AG04449 (cell line): ENCODE measurements at regions of chr17 and their contacts with region 1.

Region 1: GRCh38 chr17:20009302-20010098 is at the start of gene SPECC1:
- DNase-seq: no peak
- H3K4me3 ChIP-seq: peak within 1 kb of the TSS; percentile 51
- CTCF ChIP-seq: peak; percentile 83

Region 2: GRCh38 chr17:19812407-19812806 is 197.1 kb before region 1 on chr17:
- CTCF ChIA-PET with region 1: no interaction called
- POLR2A ChIA-PET with region 1: no interaction called
- DNase-seq: peak; percentile 1
- H3K4me3 ChIP-seq: no peak overlapping the region
- CTCF ChIP-seq: peak; percentile 10

Region 3: DNA sequence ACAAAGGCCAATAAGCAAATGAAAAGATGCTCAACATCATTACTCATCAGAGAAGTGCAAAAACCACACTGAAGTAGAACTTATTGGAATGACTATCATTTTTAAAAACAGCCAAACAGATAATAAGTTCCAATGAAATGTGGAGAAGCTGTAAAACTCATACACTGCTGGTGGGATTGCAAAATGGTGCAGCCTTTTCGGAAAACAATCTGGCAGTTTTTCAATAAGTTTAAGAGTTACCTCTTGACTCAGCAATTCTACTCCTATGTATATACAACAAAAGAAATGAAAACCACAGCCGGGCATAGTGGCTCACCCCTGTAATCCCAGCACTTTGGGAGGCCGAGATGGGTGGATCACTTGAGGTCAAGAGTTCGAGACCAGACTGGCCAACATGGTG is 81.2 kb before region 1 on chr17:
- CTCF ChIA-PET with region 1: no interaction called
- POLR2A ChIA-PET with region 1: no interaction called
- DNase-seq: no peak
- H3K4me3 ChIP-seq: no peak overlapping the region
- CTCF ChIP-seq: no peak

Region 4: DNA sequence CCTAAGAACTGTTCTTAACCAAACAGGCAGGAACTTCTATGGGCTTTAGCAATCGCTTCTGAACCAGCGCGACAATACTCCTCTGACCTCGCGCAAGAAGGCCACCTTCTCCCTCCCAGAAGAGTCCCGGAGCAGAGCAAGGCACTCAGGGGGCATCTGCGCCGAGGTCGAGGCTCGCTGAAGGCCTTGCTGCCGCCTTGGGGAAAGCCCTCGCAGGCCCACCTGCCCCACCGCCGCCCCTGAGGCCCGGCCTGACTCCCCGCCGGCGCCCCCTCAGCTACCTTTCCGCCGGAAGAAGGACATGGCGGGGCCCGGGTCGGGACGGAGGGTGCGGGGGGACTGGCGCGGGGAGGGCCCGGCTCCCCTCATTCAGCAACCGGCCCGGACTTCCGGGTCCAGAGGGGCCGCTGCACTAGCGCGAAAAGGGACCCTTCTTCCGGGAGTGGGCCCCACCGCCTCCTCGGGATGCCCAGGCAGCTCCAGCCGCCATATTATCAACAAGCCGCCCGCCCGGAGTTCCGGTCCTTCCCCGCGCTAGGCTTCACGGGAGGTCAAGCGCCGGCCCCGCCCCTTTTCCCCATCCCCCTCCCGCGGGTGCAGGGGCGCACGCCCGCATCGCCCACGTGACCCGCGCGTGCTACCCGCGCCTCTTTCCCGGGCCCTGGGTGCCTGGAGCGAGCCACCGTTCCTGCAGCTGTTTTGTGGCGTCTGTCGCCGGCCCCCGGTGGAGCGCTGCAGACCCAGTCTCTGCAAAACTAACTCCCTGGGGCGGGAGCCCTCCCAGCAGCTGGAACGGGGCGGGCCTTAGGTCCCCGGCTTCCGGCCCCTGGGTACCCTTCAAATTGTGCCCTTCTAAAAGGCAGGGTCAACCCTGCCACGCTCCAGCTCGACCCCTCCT is 31.9 kb before region 1 on chr17 and contains the start of gene AKAP10:
- CTCF ChIA-PET with region 1: interaction called, 11 read pairs
- POLR2A ChIA-PET with region 1: no interaction called
- DNase-seq: peak; percentile 9
- H3K4me3 ChIP-seq: peak within 1 kb of the TSS; percentile 92
- CTCF ChIP-seq: no peak

Region 5: GRCh38 chr17:19992803-19993713 is 16.4 kb before region 1 on chr17:
- CTCF ChIA-PET with region 1: interaction called, 140 read pairs
- POLR2A ChIA-PET with region 1: no interaction called
- DNase-seq: peak; percentile 26
- H3K4me3 ChIP-seq: no peak overlapping the region
- CTCF ChIP-seq: peak; percentile 62

Region 6: DNA sequence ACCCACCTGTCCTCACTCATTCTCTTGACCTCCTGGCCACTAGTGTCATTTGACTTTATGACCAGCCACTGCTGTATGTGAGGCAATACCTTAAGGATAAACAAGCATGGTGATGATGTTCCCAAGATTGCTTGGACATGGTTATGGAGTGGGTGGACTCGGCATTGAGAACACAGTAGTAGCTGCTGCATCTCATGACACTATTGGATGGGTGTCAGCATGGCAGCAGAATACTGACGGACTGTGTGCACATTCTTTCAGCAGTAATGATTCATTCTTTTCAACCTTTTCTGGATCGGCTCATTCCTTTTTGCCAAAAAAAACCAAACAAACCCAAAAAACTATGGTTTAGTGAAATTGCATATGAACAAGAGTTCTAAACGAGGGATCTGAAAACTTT is 13.2 kb after region 1 on chr17:
- CTCF ChIA-PET with region 1: interaction called, 10 read pairs
- POLR2A ChIA-PET with region 1: no interaction called
- DNase-seq: no peak
- H3K4me3 ChIP-seq: no peak overlapping the region
- CTCF ChIP-seq: no peak

Region 7: GRCh38 chr17:20043021-20043420 is 33.5 kb after region 1 on chr17:
- CTCF ChIA-PET with region 1: interaction called, 11 read pairs
- POLR2A ChIA-PET with region 1: no interaction called
- DNase-seq: no peak
- H3K4me3 ChIP-seq: no peak overlapping the region
- CTCF ChIP-seq: no peak

Region 8: DNA sequence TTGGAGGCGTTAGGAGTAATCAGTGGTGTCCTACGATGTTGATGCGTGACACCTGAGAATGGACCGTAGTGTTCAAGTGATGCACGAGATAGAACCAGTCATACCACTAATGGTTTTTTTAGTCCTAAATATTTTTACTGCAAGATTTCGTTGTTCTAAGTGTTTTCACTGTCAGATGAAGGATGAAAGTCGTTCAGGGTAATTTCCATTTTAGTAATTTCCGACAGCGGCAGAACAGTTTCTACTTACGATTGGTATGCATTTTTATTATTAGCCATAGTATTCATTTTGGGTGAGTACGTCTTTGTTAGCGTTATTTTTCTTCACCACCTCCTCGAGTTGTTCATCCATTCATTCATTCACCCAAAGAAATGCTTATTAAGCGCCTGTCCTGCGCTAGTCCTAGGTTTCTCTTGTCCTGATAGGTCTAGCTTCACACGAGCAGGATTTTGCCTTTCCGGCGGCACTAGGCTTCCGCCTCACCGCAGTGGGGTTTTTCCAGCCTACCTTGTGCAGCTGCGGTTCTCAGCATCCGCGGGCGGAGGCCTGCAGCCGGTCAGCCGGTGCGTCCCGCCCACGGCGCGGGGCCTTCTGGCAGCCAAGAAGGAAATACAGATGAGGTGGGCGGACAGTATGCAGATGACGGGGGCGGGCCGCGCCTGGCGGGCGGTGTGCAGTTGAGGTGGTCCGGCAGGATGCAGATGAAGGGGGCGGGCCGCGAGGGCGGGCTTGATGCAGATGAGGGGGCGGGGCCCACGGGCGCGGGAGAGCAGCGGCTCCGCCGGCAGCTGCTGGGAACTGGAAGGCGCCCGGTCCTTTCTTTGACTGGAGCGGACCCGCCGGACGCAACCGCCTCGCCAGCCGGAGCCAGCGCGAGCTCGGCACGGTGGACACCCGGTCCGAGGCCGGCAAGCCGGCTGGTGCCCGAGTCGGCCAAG is 146.0 kb after region 1 on chr17:
- CTCF ChIA-PET with region 1: no interaction called
- POLR2A ChIA-PET with region 1: no interaction called
- DNase-seq: no peak
- H3K4me3 ChIP-seq: peak overlapping the region; percentile 57
- CTCF ChIP-seq: no peak